ENCODE measurements at regions of chrX and their contacts with region 1.

Region 1: DNA sequence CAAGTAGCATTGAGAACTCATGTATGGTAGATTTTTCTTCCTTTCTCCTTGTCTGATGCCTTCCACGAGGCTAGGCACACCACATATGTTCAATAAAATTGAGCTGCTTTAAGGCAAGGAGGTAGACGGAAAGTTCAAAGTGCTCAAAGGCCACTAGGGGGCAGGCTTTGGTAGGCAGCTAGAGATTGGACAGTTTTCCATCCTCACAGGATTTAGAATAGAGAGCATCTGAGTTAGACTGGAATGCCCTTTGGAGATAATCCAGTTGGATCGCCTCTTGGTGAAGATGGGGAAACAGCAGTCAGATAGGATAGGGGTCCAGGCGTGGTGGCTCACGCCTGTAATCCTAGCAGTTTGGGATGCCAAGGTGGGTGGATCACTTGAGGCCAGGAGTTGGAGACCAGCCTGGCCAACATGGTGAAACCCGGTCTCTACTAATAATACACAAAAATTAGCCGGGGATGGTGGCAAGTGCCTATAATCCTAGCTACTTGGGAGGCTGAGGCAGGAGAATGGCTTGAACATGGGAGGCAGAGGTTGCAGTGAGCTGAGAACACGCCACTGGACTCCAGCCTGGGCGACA is 30.4 kb downstream of the ELF4 start:
- DNase-seq: peak; percentile 69
- ATAC-seq: no peak
- H3K4me3 Mint-ChIP-seq: no peak overlapping the region
- H3K27ac Mint-ChIP-seq: peak overlapping the region; percentile 25
- H3K4me1 Mint-ChIP-seq: peaks cover 47% of the 10 kb centered on the region
- H3K27me3 Mint-ChIP-seq: no peaks in the 10 kb centered on the region
- CTCF ChIP-seq: peak; percentile 72

Region 2: GRCh38 chrX:130110379-130111219 is 30.7 kb after region 1 on chrX and contains the start of gene ELF4:
- CTCF ChIA-PET with region 1: interaction called, 18 read pairs
- POLR2A ChIA-PET with region 1: interaction called, 22 read pairs
- intact Hi-C with region 1: no loop called
- DNase-seq: peak; percentile 58
- ATAC-seq: peak; percentile 70
- H3K4me3 Mint-ChIP-seq: peak within 1 kb of the TSS; percentile 90
- H3K27ac Mint-ChIP-seq: peak within 1 kb of the TSS; percentile 95
- H3K4me1 Mint-ChIP-seq: peaks cover 40% of the 10 kb centered on the region
- H3K27me3 Mint-ChIP-seq: no peaks in the 10 kb centered on the region
- CTCF ChIP-seq: no peak
- total RNA-seq, gene ELF4: 17.5 TPM

Region 3: DNA sequence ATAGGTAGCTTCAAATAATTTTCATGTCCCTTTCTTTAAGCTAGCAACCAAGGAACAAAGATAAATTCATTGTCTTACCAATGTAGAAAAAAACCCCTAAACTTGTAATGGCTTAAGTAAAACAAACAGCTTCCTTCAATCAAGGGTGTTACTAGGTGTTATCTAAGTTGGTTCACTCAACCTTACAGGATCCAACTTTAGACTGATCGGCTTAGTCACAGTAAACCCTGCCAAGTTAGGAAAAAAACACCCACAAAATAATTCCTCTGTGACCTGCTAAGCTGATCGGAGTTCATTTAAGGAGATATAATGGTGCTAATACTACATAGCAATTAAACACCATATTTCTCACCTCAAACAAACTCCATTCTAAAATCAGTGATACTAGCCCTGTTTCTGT is 75.6 kb after region 1 on chrX:
- CTCF ChIA-PET with region 1: interaction called, 11 read pairs
- POLR2A ChIA-PET with region 1: no interaction called
- intact Hi-C with region 1: no loop called
- DNase-seq: no peak
- ATAC-seq: no peak
- H3K4me3 Mint-ChIP-seq: no peak overlapping the region
- H3K27ac Mint-ChIP-seq: no peak overlapping the region
- H3K4me1 Mint-ChIP-seq: peaks cover 15% of the 10 kb centered on the region
- H3K27me3 Mint-ChIP-seq: no peaks in the 10 kb centered on the region
- CTCF ChIP-seq: no peak

Region 4: GRCh38 chrX:130186651-130187050 is 106.7 kb after region 1 on chrX:
- CTCF ChIA-PET with region 1: interaction called, 49 read pairs
- POLR2A ChIA-PET with region 1: no interaction called
- intact Hi-C with region 1: loop called (anchors 5 kb)
- DNase-seq: no peak
- ATAC-seq: no peak
- H3K4me3 Mint-ChIP-seq: no peak overlapping the region
- H3K27ac Mint-ChIP-seq: no peak overlapping the region
- H3K4me1 Mint-ChIP-seq: peaks cover 18% of the 10 kb centered on the region
- H3K27me3 Mint-ChIP-seq: no peaks in the 10 kb centered on the region
- CTCF ChIP-seq: no peak

Measured in activated CD8-positive, alpha-beta T cell treated with anti-CD3 and anti-CD28 coated beads for 36 hours (primary cell).